Right cardiac atrium (tissue), 5 donors: ENCODE measurements at regions of chr22 and their contacts with region 1.

Region 1: DNA sequence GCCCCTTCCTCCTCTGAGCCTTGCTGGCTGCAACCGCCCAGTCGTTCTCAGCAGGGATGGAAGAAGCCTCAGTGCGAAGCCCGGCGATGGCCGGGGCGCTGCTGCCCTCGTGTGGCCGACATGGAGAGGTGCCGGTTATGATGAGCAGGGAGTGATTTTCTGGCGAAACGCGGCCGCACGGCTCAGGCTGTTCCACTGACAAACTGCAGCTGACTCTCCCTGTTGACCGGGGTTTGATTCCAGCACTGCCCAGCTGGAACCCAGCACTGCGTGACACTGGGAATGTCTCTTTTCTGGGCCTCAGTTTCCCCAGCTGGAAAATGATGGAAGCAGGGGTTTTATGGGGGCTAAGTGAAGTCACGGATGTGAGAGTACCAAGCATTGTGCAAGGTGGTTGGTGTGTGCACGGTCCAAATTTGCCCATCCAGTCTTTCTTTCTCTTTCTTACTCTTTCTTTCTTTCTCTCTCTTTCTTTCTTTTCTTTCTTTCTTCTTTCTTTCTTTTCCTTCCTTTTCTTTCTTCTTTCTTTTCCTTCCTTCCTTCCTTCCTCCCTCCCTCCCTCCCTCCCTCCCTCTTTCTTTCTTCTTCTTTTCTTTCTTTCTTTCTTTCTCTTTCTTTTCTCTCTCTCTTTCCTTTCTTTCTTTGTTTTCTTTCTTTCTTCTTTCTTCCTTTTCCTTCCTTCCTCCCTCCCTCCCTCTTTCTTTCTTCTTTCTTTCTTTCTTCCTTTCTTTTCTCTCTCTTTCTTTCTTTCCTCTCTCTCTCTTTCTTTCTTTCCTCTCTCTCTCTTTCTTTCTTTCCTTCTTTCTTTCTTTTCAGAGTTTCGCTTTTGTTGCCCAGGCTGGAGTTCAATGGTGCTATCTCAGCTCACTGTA is 25.8 kb upstream of the MPPED1 start:
- DNase-seq: peak; percentile 72 to 90 (median 87)
- ATAC-seq: peak; percentile 88 to 92
- H3K4me3 ChIP-seq: no peak overlapping the region
- H3K27ac ChIP-seq: no peak overlapping the region
- H3K4me1 ChIP-seq: no peaks in the 10 kb centered on the region
- H3K27me3 ChIP-seq: no peaks in the 10 kb centered on the region

Region 2: GRCh38 chr22:43230971-43231723 is 154.9 kb before region 1 on chr22:
- intact Hi-C with region 1: loop called in 3 of 4 experiments (anchors 5 kb)
- DNase-seq: peak; percentile 40 to 78 (median 70)
- ATAC-seq: peak in 1 of 2 donors; percentile 38
- H3K4me3 ChIP-seq: no peak overlapping the region
- H3K27ac ChIP-seq: no peak overlapping the region
- H3K4me1 ChIP-seq: no peaks in the 10 kb centered on the region
- H3K27me3 ChIP-seq: no peaks in the 10 kb centered on the region

Region 3: DNA sequence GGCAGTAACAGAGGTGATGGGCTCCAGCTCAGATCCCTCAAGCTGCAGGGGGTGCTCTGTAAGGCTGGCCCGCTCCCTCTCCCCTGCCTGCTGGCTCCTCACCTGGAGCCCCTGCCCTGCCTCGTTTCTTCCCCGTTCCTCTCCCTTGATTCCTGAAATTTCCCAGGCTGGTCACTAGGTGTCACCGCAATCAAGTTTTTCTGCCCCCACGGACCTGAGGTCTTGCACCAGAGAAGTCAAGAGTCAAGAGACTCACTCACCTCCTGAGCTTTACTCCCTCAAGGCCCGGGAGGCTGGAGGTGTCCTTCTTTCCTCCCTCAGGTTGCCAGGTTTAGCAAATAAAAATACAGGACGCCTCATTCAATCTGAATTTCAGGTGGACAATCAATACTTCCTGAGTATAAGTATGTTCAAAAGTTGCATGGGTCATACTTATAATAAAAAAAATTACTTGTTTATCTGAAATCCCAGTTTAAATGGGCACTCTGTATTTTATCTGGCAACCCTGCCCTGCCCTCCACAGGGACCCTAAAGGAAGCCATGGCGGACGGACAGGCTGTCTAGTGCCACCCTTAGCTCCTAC is 112.0 kb before region 1 on chr22:
- intact Hi-C with region 1: loop called in 2 of 4 experiments (anchors 2 kb)
- DNase-seq: no peak
- ATAC-seq: peak; percentile 37 to 54
- H3K4me3 ChIP-seq: no peak overlapping the region
- H3K27ac ChIP-seq: no peak overlapping the region
- H3K4me1 ChIP-seq: no peaks in the 10 kb centered on the region
- H3K27me3 ChIP-seq: no peaks in the 10 kb centered on the region

Region 4: DNA sequence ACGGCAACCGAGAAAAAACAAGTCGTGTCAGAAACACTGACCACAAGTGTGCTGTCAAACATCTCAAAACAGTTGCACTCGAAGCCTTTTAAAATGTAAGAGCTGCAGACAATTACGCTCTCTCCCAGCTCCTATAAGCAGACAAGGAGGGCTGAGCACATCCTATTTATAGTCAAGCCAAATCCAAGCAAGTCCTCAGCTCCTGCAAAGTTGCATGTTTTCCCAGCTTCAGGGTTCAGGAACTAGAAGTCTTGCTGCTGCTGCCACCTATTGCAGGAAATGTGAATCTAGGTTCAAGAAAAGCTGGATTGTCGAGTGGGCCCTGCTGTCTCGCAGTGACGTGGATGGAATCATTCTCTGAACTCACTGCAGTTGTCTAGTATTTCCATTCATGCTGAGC is 410.6 kb after region 1 on chr22:
- intact Hi-C with region 1: loop called in 2 of 4 experiments (anchors 5 kb)
- DNase-seq: no peak
- ATAC-seq: peak; percentile 34 to 80
- H3K4me3 ChIP-seq: no peak overlapping the region
- H3K27ac ChIP-seq: no peak overlapping the region
- H3K4me1 ChIP-seq: no peaks in the 10 kb centered on the region
- H3K27me3 ChIP-seq: no peaks in the 10 kb centered on the region

Region 5: DNA sequence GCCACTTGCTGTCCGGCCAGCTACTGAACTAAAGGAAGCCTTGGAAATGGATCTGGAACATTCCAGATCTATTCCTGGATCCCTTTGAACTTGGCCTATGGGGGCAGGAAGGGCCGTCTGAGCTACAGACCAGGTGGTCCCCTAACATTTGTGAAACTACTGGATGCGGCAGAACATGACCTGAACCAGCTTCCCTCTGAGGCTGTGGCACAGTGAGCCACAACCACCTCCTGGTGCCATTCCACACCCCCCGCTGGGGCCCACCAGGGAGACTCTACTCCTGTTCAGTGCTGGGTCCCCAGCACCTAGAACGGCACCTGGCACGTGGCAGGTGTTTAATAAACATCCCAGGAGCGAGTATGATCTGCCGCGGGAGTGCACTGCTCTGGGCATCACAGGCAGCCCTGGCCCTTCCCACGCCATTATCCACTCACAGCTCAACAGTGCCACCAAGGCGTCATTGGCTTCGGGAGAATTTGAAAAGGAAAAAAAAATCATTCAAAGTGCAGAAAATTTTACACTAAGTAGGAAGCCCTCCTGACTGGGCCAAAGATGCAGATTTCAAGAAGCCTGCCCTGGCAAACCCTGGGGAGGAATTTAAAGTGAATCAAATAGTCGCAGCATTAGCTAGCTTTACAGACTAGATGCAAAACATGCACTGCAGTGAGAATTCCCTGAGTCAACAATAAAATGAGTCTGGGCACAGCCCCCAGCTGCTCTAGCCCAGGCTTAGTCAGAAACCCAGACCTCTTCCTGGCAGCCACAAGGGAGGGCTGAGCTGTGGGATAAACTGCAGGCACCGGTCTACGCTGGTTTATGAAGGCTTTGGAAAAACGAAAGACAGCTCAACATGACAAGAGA is 440.4 kb after region 1 on chr22:
- intact Hi-C with region 1: loop called in 1 of 4 experiments (anchors 10 kb)
- DNase-seq: peak in 2 of 3 donors; percentile 62 to 68
- ATAC-seq: no peak
- H3K4me3 ChIP-seq: no peak overlapping the region
- H3K27ac ChIP-seq: no peak overlapping the region
- H3K4me1 ChIP-seq: peaks cover 2% of the 10 kb centered on the region
- H3K27me3 ChIP-seq: no peaks in the 10 kb centered on the region

Region 6: DNA sequence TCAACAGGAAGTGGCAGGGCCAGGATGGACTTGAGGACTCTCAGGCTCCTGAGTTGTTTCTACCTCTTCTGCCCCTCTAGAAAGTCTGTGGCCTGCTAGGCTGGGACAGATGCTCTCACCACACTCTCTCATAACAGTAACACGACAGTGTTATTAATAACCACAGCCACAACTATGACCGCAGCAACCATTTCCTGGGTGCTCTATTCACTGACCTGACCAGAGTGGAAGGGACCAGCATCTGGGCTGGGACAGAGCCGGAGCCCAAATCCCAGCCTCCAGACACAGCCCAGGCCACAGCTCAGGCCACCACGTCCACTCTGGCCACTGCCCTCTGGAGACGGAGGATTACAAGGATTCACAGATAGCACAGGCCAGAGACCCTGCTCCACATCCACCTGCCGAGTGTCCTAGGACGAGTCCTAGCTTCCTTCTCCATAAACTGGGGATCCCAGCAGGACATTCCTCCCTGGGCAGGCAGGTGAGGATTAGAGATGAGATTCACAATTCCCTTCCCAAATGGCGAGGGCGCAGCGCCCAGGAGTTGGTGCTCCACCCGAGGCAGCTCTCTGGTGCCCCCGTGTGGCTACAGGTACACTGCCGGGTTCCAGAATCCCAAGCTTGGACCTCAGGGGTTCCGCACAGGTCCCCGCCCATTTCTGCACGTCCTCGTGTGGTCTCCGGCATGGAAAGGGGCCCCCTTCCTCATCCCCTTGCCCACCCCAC is 498.8 kb after region 1 on chr22:
- intact Hi-C with region 1: loop called in 1 of 4 experiments (anchors 5 kb)
- DNase-seq: peak; percentile 71 to 90 (median 80)
- ATAC-seq: peak in 1 of 2 donors; percentile 18
- H3K4me3 ChIP-seq: no peak overlapping the region
- H3K27ac ChIP-seq: no peak overlapping the region
- H3K4me1 ChIP-seq: no peaks in the 10 kb centered on the region
- H3K27me3 ChIP-seq: no peaks in the 10 kb centered on the region

Region 7: GRCh38 chr22:44625981-44626687 is 1240.1 kb after region 1 on chr22:
- intact Hi-C with region 1: loop called in 1 of 4 experiments (anchors 10 kb)
- DNase-seq: peak; percentile 65 to 85 (median 85)
- ATAC-seq: peak; percentile 64 to 66
- H3K4me3 ChIP-seq: no peak overlapping the region
- H3K27ac ChIP-seq: no peak overlapping the region
- H3K4me1 ChIP-seq: no peaks in the 10 kb centered on the region
- H3K27me3 ChIP-seq: no peaks in the 10 kb centered on the region